Heart left ventricle (tissue), 16 donors: ENCODE measurements at regions of chr22 and their contacts with region 1.

Region 1: GRCh38 chr22:17199003-17199731 is 20.1 kb downstream of the ADA2 start:
- DNase-seq: peak in 4 of 5 donors; percentile 50 to 69 (median 66)
- ATAC-seq: peak; percentile 43 to 82 (median 76)
- H3K4me3 ChIP-seq: peak overlapping the region; percentile 1 to 62 (median 53)
- H3K27ac ChIP-seq: peak overlapping the region; percentile 66 to 92 (median 87)
- H3K4me1 ChIP-seq: peaks cover 0 to 21% (median 7%) of the 10 kb centered on the region in 12 donors
- H3K27me3 ChIP-seq: no peaks in the 10 kb centered on the region
- CTCF ChIP-seq: no peak
- POLR2A ChIP-seq: no peak

Region 2: GRCh38 chr22:17084554-17085276 is 114.5 kb before region 1 on chr22 and contains the start of gene IL17RA:
- intact Hi-C with region 1: loop called in 2 of 10 experiments (anchors 5 to 10 kb)
- DNase-seq: peak; percentile 92 to 95 (median 93)
- ATAC-seq: peak; percentile 99 to 100 (median 99)
- H3K4me3 ChIP-seq: peak within 1 kb of the TSS; percentile 71 to 98 (median 90)
- H3K27ac ChIP-seq: peak within 1 kb of the TSS; percentile 67 to 98 (median 86)
- H3K4me1 ChIP-seq: peaks cover 0 to 49% (median 16%) of the 10 kb centered on the region in 12 donors
- H3K27me3 ChIP-seq: no peaks in the 10 kb centered on the region
- CTCF ChIP-seq: no peak
- POLR2A ChIP-seq: peak in 1 of 2 donors; percentile 87
- total RNA-seq, gene IL17RA: 5.8 to 23.1 (median 9.4) TPM

Region 3: GRCh38 chr22:17158568-17159503 is 40.3 kb before region 1 on chr22 and contains the start of gene HDHD5:
- intact Hi-C with region 1: loop called in 1 of 10 experiments (anchors 5 kb)
- DNase-seq: peak; percentile 92 to 96 (median 93)
- ATAC-seq: peak; percentile 84 to 95 (median 93)
- H3K4me3 ChIP-seq: peak within 1 kb of the TSS; percentile 69 to 94 (median 80)
- H3K27ac ChIP-seq: peak within 1 kb of the TSS; percentile 82 to 97 (median 92)
- H3K4me1 ChIP-seq: peaks cover 0 to 40% (median 25%) of the 10 kb centered on the region in 12 donors
- H3K27me3 ChIP-seq: no peaks in the 10 kb centered on the region
- CTCF ChIP-seq: peak in 2 of 12 donors; percentile 6 to 18
- POLR2A ChIP-seq: peak in 1 of 2 donors; percentile 49
- total RNA-seq, gene HDHD5: 35.7 to 60.3 (median 49.0) TPM

Region 4: DNA sequence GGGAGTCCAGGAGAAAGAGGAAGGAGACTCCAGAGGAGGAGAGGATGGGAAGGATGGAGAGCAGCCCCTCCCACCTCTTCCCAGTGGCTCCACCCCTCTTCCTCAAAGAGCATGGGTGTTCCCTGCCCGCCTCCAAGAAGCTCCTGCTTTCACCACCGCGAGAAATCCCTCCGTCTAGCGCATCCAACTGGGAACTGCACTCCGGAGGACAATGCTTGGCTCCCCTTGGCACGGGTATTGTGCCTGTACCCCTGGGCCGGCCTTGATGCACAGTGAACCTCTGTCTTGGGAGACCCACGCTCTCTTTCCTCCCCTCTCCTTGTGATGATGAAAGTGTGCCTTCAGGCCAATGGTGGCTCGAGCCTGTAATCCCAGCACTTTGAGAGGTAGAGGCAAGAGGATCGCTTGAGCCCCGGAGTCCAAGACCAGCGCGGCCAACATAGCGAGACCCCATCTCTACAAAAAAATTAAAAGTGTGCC is 35.0 kb after region 1 on chr22:
- intact Hi-C with region 1: no loop called
- DNase-seq: no peak
- ATAC-seq: no peak
- H3K4me3 ChIP-seq: no peak overlapping the region
- H3K27ac ChIP-seq: no peak overlapping the region
- H3K4me1 ChIP-seq: peaks cover 0 to 18% (median 0%) of the 10 kb centered on the region in 12 donors
- H3K27me3 ChIP-seq: peaks cover 0 to 21% (median 4%) of the 10 kb centered on the region in 9 donors
- CTCF ChIP-seq: peak in 1 of 12 donors; percentile 16
- POLR2A ChIP-seq: no peak

Region 5: GRCh38 chr22:17492247-17492646 is 293.1 kb after region 1 on chr22:
- intact Hi-C with region 1: loop called in 1 of 10 experiments (anchors 10 kb)
- DNase-seq: peak in 2 of 5 donors; percentile 39 to 54
- ATAC-seq: peak; percentile 80 to 85 (median 81)
- H3K4me3 ChIP-seq: no peak overlapping the region
- H3K27ac ChIP-seq: peak overlapping the region in 8 of 12 donors; percentile 6 to 62 (median 25)
- H3K4me1 ChIP-seq: peaks cover 0 to 19% (median 8%) of the 10 kb centered on the region in 12 donors
- H3K27me3 ChIP-seq: no peaks in the 10 kb centered on the region
- CTCF ChIP-seq: no peak
- POLR2A ChIP-seq: no peak

Region 6: DNA sequence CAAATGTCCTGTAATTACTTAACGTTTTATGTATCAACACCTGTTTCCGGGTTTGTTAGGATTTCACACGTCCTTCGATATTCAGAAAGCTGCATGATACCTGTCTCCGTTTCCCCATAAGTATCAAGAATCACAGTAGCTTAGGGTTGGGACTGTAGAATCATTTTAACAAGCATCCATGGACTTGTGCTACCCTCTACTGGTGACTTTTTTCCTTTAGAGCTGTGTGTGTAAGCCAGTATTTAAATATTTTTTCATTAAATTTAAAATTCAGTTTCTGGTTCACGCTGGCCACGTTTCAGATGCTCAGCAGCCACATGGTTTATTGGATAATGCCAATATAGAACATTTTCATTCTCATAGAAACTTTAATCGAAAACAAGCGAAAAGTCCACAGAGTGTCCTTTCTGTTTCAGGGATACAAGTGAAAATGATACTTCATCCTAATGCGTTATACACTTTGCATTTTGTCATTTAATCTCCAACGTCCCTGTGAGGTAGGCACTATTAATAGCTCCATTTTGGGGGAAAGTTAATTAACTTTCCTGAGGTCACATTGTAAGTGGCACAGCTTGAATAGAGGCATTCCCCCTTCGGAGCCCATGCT is 302.6 kb after region 1 on chr22:
- intact Hi-C with region 1: loop called in 3 of 10 experiments (anchors 5 to 10 kb)
- DNase-seq: peak in 2 of 5 donors; percentile 19 to 26
- ATAC-seq: peak; percentile 76 to 88 (median 86)
- H3K4me3 ChIP-seq: no peak overlapping the region
- H3K27ac ChIP-seq: no peak overlapping the region
- H3K4me1 ChIP-seq: no peaks in the 10 kb centered on the region
- H3K27me3 ChIP-seq: no peaks in the 10 kb centered on the region
- CTCF ChIP-seq: peak; percentile 51 to 81 (median 69)
- POLR2A ChIP-seq: no peak